A549 (cell line): ENCODE measurements at regions of chr18 and their contacts with region 1.

Region 1: GRCh38 chr18:59402432-59403090 is 43.5 kb upstream of the LMAN1 start:
- DNase-seq: peak; percentile 76 to 87
- ATAC-seq: peak; percentile 100
- H3K4me3 ChIP-seq: no peak overlapping the region
- H3K27ac ChIP-seq: no peak overlapping the region
- H3K4me1 ChIP-seq: no peaks in the 10 kb centered on the region
- CTCF ChIP-seq: peak; percentile 85
- EP300 ChIP-seq: no peak
- POLR2A ChIP-seq: no peak
- RAD21 ChIP-seq: peak; percentile 90 to 95

Region 2: GRCh38 chr18:59070181-59070912 is 332.2 kb before region 1 on chr18:
- CTCF ChIA-PET with region 1: no interaction called
- POLR2A ChIA-PET with region 1: interaction called, 11 read pairs
- DNase-seq: peak; percentile 55 to 86
- ATAC-seq: peak; percentile 96
- H3K4me3 ChIP-seq: no peak overlapping the region
- H3K27ac ChIP-seq: peak overlapping the region; percentile 73 to 84
- H3K4me1 ChIP-seq: peaks cover 28% of the 10 kb centered on the region
- CTCF ChIP-seq: peak; percentile 74
- EP300 ChIP-seq: no peak
- POLR2A ChIP-seq: no peak
- RAD21 ChIP-seq: peak; percentile 90 to 94

Region 3: GRCh38 chr18:59268721-59269562 is 133.6 kb before region 1 on chr18:
- CTCF ChIA-PET with region 1: interaction called, 15 read pairs
- POLR2A ChIA-PET with region 1: no interaction called
- DNase-seq: peak; percentile 57 to 58
- ATAC-seq: peak; percentile 68 to 79
- H3K4me3 ChIP-seq: peak overlapping the region; percentile 45
- H3K27ac ChIP-seq: peak overlapping the region in 1 of 2 experiments; percentile 51; a peak in 3 of 6 replicates
- H3K4me1 ChIP-seq: no peaks in the 10 kb centered on the region
- CTCF ChIP-seq: peak; percentile 63
- EP300 ChIP-seq: no peak
- POLR2A ChIP-seq: no peak
- RAD21 ChIP-seq: peak in 1 of 2 experiments; percentile 30; a peak in 3 of 5 replicates

Region 4: DNA sequence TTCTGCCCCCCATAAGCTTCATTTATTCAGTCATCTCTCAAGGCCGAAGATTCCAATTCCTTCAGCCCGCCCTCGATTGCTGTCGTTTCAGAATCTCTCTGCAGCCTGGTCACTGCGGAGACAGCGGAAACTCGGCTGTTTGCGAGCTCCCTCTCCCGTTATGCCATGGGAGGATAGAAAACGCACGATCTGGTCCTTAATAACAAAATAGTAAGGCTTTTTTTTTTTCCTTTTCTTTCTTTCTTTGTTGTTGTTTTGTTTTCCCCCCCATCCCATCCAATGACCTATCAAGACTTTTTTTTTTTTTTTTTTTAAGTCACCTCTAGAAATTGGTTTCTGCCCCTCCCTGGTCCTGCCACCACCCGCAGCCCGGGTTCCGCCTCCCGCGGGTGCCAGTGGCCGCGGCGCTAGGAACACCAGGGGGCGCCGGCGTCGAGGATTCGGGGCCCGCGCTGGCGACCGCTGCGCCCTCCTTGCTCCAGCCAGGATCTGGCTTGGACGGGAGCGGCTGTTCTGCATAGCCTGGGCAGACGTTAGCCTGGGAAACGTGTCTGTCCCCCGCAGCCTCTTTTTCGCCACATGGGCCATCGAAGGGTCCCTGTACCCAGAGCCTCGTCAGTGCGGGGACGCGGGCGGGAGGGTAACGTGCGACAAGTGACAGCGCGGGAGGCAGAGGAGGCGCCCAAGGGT is 94.2 kb before region 1 on chr18:
- CTCF ChIA-PET with region 1: interaction called, 108 read pairs
- POLR2A ChIA-PET with region 1: no interaction called
- DNase-seq: peak; percentile 55 to 61
- ATAC-seq: peak; percentile 98 to 99
- H3K4me3 ChIP-seq: peak overlapping the region; percentile 44
- H3K27ac ChIP-seq: no peak overlapping the region; a peak in 1 of 6 replicates
- H3K4me1 ChIP-seq: no peaks in the 10 kb centered on the region
- CTCF ChIP-seq: peak; percentile 77
- EP300 ChIP-seq: no peak
- POLR2A ChIP-seq: no peak
- RAD21 ChIP-seq: peak; percentile 44 to 72

Region 5: GRCh38 chr18:59382383-59382782 is 20.2 kb before region 1 on chr18:
- CTCF ChIA-PET with region 1: interaction called, 10 read pairs
- POLR2A ChIA-PET with region 1: no interaction called
- DNase-seq: no peak
- ATAC-seq: no peak
- H3K4me3 ChIP-seq: no peak overlapping the region
- H3K27ac ChIP-seq: no peak overlapping the region
- H3K4me1 ChIP-seq: no peaks in the 10 kb centered on the region
- CTCF ChIP-seq: no peak
- EP300 ChIP-seq: no peak
- POLR2A ChIP-seq: no peak
- RAD21 ChIP-seq: no peak